CD4-positive, alpha-beta T cell (primary cell): ENCODE measurements at regions of chr19 and their contacts with region 1.

Region 1: DNA sequence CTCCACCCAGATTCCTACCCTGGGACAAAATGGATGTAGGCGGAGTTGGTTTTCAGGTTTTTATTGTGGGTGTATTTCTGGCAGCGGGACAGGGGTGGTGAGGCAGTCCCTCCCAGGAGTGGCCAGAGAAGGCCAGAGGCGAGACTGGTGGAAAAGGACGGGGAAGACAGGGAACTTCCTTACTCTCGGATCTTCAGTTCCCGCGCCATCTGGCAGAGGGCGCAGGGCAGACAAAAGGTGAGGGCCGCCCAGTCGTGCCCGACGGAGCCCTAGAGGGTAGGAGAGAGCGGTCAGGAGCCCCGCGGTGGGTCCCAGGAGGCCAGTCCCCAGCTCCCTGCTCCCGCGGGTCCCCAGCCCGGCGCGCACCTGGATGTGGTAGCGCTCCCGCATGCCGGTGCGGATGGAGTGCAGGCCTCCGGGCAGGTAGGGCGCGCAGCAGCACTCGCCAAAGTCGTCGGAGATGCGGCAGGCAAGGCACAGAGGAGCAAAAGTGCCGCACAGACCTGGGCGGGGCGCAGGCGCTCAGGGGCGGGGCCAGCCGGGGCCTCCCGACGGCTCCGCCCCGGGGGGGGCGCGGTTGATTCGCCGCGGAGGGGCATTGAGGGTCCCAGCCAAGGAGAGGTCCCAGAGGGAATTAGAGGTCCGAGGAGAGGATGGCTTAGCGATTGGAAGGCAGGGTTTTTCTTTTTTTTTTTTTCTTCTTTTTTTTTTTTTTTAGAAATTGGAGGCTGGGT is 3.0 kb downstream of the CNFN start:
- DNase-seq: peak; percentile 48 to 79 (median 63)
- ATAC-seq: peak; percentile 95
- H3K4me3 ChIP-seq: peak overlapping the region; percentile 28
- H3K4me3 Mint-ChIP-seq: peak overlapping the region; percentile 22
- H3K27ac ChIP-seq: no peak overlapping the region
- H3K27ac Mint-ChIP-seq: no peak overlapping the region
- H3K4me1 ChIP-seq: peaks cover 9% of the 10 kb centered on the region
- H3K4me1 Mint-ChIP-seq: peaks cover 7% of the 10 kb centered on the region
- H3K27me3 ChIP-seq: peaks cover 21 to 28% of the 10 kb centered on the region in 2 experiments
- H3K27me3 Mint-ChIP-seq: peaks cover 54% of the 10 kb centered on the region
- CTCF ChIP-seq: peak; percentile 55

Region 2: DNA sequence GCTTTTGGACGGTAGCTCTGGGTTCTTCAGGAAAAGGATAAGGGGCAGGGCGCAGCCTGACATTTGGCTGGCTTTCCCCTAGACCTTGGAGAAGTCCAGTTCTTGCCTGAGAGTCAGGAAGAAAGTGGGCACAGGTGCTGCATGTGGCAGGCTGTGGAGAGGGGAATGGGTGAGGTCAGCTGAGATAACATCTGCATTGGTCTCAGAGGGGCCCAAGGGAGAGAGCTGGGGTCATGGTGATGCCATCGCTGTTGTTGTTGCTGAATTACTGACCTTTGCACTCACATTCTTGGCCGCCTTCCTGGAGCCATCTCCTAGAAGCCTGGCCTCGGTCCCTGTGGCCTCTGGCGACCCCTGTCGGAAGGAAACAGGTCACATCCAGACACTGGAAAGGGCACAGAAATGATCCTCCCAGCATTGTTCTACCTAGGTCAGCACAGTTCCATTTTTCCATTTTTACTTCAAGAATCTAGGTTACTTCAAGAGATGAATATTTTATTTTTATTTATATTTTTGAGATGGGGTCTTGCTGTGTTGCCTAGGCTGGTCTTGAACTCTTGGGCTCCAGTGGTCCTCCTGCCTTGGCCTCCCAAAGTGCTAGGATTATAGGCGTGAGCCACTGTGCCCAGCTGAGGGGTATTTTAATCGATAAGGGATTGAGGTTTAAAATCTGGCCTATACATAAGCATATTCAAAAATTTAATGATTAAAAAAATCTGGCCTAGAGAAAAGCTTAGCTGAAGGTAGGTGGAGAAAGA is 46.5 kb after region 1 on chr19:
- CTCF ChIA-PET with region 1: interaction called, 4 read pairs
- POLR2A ChIA-PET with region 1: no interaction called
- intact Hi-C with region 1: loop called (anchors 1 kb)
- DNase-seq: peak; percentile 52 to 79 (median 62)
- ATAC-seq: peak; percentile 65
- H3K4me3 ChIP-seq: no peak overlapping the region
- H3K4me3 Mint-ChIP-seq: no peak overlapping the region
- H3K27ac ChIP-seq: no peak overlapping the region
- H3K27ac Mint-ChIP-seq: no peak overlapping the region
- H3K4me1 ChIP-seq: peaks cover 8% of the 10 kb centered on the region
- H3K4me1 Mint-ChIP-seq: peaks cover 6% of the 10 kb centered on the region
- H3K27me3 ChIP-seq: no peaks in the 10 kb centered on the region
- H3K27me3 Mint-ChIP-seq: no peaks in the 10 kb centered on the region
- CTCF ChIP-seq: peak; percentile 78